Naive thymus-derived CD4-positive, alpha-beta T cell (primary cell): ENCODE measurements at regions of chr17 and their contacts with region 1.

Region 1: DNA sequence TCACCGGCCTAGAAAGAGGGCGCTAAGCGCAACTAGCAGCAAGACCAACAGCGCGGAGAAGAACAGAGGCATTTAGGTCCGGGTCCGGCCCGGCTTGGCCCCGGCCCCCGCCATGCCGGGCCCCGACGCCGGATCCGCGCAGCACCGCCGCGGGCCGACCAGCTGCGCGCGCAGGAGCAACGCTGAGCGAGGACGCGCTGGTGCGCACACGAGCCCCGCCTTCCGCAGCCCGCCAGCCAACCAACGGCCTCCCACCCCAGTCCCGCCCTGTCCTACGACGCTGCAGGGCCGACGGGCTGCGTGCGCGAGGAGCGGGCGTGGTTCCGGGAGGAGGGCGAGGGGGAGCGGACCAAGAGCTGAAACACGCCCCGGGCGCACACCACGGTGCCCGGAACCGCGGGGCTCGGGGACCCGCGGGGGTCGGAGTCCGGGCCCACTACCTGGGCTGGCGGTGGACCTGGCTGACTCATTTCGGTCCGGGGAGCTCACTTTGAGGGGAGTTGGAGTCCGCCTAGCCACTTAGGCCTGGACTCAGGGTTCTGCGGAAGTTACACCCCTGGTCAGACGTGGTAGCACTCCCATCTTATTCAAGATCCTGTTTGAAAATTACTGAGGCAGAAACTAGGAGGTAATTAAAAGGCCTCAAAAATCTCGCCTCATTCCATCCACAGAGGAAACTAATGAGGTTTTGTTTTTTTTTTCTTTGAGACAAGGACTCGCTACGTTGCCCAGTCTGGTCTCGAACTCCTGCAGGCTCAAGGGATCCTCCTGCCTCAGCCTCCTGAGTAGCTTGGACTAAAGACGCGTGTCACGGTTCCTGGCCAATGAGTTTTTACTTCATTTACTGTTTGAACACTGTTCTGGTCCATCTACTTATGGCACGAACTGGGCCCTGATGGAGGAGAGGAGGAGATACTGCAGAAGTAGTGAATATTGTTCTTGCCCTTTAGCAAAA is at the start of gene BLTP2:
- DNase-seq: peak; percentile 86 to 95 (median 93)
- ATAC-seq: peak; percentile 99
- H3K4me3 ChIP-seq: peak within 1 kb of the TSS; percentile 87
- H3K4me3 Mint-ChIP-seq: peak within 1 kb of the TSS; percentile 89 to 99 (median 94)
- H3K27ac ChIP-seq: peak within 1 kb of the TSS; percentile 95
- H3K27ac Mint-ChIP-seq: peak within 1 kb of the TSS; percentile 90 to 99 (median 97)
- H3K4me1 ChIP-seq: peaks cover 26 to 29% of the 10 kb centered on the region in 2 donors
- H3K4me1 Mint-ChIP-seq: peaks cover 29 to 57% (median 39%) of the 10 kb centered on the region in 7 donors
- H3K27me3 ChIP-seq: no peaks in the 10 kb centered on the region
- H3K27me3 Mint-ChIP-seq: no peaks in the 10 kb centered on the region
- total RNA-seq, gene BLTP2: 143 to 163 (median 153) TPM

Region 2: DNA sequence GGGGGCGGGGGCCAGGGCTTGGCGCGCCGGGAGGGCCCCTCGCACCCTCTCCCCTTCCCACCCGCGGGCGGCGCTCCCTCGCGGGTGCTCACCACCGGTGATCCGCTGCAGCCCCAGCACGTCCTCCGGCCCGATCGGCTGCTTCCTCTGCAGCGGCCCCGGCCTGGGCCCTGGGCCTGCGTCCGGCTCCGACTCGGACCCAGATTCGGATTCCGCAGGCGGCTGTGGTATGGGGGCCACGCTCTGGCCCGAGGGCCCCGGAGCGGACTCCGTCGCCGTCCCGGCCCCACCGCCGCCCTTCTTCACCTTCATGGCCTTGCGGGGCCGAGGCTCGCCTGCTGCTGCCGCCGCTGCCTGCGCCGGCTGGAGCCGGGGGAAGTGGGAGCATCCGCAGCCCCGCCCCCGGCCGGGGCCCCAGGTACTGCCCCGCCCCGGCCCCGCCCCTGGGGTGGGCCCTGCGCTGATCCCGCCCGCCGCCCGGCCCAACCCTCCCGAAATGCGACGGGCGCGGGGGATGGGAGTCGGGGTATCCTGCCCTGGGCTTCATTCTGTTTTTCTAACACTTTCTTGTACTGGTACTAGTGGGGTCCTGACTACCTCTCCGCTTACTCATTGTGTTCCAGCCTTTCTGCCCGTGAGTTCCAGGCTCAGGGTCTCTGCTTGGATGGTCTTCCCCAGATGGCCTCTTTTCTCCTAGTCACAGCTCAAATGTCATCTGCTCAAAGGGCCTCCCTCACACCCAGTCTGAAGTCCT is 92.8 kb before region 1 on chr17 and contains the start of gene UNC119:
- CTCF ChIA-PET with region 1: no interaction called
- POLR2A ChIA-PET with region 1: no interaction called
- intact Hi-C with region 1: loop called in 1 of 2 experiments (anchors 2 kb)
- DNase-seq: peak; percentile 59 to 87 (median 76)
- ATAC-seq: peak; percentile 84
- H3K4me3 ChIP-seq: peak within 1 kb of the TSS; percentile 54
- H3K4me3 Mint-ChIP-seq: peak within 1 kb of the TSS; percentile 85 to 100 (median 92)
- H3K27ac ChIP-seq: peak within 1 kb of the TSS; percentile 89
- H3K27ac Mint-ChIP-seq: peak within 1 kb of the TSS; percentile 91 to 98 (median 95)
- H3K4me1 ChIP-seq: peaks cover 35 to 44% of the 10 kb centered on the region in 2 donors
- H3K4me1 Mint-ChIP-seq: peaks cover 42 to 62% (median 54%) of the 10 kb centered on the region in 7 donors
- H3K27me3 ChIP-seq: no peaks in the 10 kb centered on the region
- H3K27me3 Mint-ChIP-seq: no peaks in the 10 kb centered on the region
- total RNA-seq, gene UNC119: 40.6 to 108 (median 90.2) TPM

Region 3: GRCh38 chr17:28598799-28599310 is 46.4 kb before region 1 on chr17 and contains the start of gene SPAG5:
- CTCF ChIA-PET with region 1: no interaction called
- POLR2A ChIA-PET with region 1: interaction called, 22 read pairs
- intact Hi-C with region 1: loop called (anchors 1 kb)
- DNase-seq: peak; percentile 93 to 97 (median 96)
- ATAC-seq: peak; percentile 98
- H3K4me3 ChIP-seq: peak within 1 kb of the TSS; percentile 93
- H3K4me3 Mint-ChIP-seq: peak within 1 kb of the TSS; percentile 88 to 99 (median 94)
- H3K27ac ChIP-seq: peak within 1 kb of the TSS; percentile 97
- H3K27ac Mint-ChIP-seq: peak within 1 kb of the TSS; percentile 96 to 99 (median 98)
- H3K4me1 ChIP-seq: peaks cover 8 to 10% of the 10 kb centered on the region in 2 donors
- H3K4me1 Mint-ChIP-seq: peaks cover 18 to 25% (median 21%) of the 10 kb centered on the region in 7 donors
- H3K27me3 ChIP-seq: no peaks in the 10 kb centered on the region
- H3K27me3 Mint-ChIP-seq: no peaks in the 10 kb centered on the region
- total RNA-seq, gene SPAG5: 10.4 to 95.3 (median 18.4) TPM

Region 4: DNA sequence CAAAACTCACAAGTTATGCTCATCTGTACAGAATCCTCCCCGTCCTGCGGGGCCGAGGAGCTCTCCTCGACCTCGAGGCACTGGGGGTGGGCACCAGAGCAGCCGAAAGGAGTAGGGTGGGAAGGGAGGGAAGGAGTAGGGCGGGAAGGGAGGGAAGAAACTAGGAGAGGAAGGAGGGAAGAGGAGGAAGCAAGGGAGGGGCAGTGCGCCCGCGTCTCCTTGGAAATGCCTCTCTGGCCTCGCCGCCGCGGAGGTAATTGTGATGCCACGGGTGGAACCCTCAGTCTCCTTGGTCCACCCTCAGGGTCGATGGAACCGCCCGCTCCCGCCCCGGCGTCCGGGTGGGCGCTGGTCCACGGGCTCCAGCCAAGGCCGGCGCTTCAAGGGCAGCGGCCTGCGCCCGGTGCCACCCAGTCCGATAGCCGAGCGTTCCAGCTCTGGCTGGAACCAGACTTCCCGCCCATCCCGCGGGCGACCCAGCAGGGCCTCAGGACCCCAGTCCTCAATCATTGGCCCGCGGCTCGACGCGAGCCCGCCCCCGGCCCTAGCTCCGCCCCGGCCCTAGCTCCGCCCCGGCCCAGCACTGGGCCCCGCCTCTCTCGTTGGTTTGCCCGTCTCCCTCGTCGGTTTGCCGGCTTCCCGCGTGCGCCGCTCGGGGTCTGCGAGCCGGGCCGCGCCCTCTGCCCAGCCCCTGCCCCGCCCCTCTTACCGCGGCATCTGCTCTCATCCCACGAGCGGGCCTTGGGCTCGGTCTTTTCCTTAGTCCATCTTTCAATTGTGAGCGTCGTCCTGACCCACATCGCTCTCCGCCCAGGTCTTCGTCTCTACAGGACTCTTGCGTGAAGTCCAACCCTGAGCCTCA is 65.8 kb after region 1 on chr17:
- CTCF ChIA-PET with region 1: no interaction called
- POLR2A ChIA-PET with region 1: interaction called, 33 read pairs
- intact Hi-C with region 1: loop called (anchors 1 kb)
- DNase-seq: peak; percentile 71 to 97 (median 85)
- ATAC-seq: peak; percentile 95
- H3K4me3 ChIP-seq: peak overlapping the region; percentile 95
- H3K4me3 Mint-ChIP-seq: peak overlapping the region; percentile 76 to 94 (median 92)
- H3K27ac ChIP-seq: peak overlapping the region; percentile 83
- H3K27ac Mint-ChIP-seq: peak overlapping the region; percentile 85 to 98 (median 93)
- H3K4me1 ChIP-seq: peaks cover 9 to 12% of the 10 kb centered on the region in 2 donors
- H3K4me1 Mint-ChIP-seq: peaks cover 12 to 29% (median 19%) of the 10 kb centered on the region in 7 donors
- H3K27me3 ChIP-seq: no peaks in the 10 kb centered on the region
- H3K27me3 Mint-ChIP-seq: peaks cover 0 to 14% (median 6%) of the 10 kb centered on the region in 5 donors

Region 5: DNA sequence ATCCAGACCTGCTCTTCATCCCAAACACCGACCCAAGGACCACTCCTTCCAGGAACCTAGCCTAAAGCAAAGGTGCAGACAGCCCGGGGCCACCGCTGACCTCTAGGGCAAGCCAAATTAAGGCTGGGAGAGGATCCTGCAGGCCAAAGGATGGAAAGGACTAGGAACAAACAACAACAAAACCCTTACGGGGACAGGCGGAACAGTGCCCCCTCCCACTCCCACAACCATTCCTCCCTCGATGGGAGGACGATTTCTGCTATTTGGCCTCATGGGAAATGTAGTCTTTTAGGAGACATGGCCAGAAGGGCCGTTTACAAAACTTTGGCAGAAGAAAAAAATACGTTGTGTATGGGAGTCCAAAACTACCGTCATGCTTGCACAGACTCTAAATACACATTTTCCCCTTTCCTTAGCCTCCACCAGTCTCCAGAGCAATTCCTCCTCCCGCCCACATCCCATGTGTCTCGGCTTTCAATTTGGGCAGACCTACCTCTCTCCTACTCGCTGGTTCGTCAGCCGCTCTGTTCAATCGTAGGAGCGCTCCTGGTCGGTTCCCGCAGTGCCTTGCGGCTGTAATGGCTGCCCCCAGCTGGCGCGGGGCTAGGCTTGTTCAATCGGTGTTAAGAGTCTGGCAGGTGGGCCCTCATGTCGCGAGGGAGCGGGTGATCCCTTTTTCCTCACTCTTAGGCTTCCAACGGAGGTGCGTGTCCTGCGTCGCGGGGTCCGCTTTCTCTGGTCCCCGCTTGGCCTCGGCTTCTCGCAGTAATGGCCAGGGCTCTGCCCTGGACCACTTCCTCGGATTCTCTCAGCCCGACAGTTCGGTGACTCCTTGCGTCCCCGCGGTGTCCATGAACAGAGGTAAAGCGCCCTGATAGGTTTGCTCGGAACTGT is 209.4 kb after region 1 on chr17 and contains the start of gene ERAL1:
- CTCF ChIA-PET with region 1: no interaction called
- POLR2A ChIA-PET with region 1: no interaction called
- intact Hi-C with region 1: loop called in 1 of 2 experiments (anchors 10 kb)
- DNase-seq: peak; percentile 63 to 87 (median 83)
- ATAC-seq: peak; percentile 100
- H3K4me3 ChIP-seq: peak within 1 kb of the TSS; percentile 86
- H3K4me3 Mint-ChIP-seq: peak within 1 kb of the TSS; percentile 90 to 100 (median 94)
- H3K27ac ChIP-seq: peak within 1 kb of the TSS; percentile 82
- H3K27ac Mint-ChIP-seq: peak within 1 kb of the TSS; percentile 85 to 94 (median 90)
- H3K4me1 ChIP-seq: peaks cover 7 to 12% of the 10 kb centered on the region in 2 donors
- H3K4me1 Mint-ChIP-seq: peaks cover 0 to 27% (median 11%) of the 10 kb centered on the region in 7 donors
- H3K27me3 ChIP-seq: no peaks in the 10 kb centered on the region
- H3K27me3 Mint-ChIP-seq: no peaks in the 10 kb centered on the region
- total RNA-seq, gene ERAL1: 19.8 to 50.0 (median 24.9) TPM

Region 6: DNA sequence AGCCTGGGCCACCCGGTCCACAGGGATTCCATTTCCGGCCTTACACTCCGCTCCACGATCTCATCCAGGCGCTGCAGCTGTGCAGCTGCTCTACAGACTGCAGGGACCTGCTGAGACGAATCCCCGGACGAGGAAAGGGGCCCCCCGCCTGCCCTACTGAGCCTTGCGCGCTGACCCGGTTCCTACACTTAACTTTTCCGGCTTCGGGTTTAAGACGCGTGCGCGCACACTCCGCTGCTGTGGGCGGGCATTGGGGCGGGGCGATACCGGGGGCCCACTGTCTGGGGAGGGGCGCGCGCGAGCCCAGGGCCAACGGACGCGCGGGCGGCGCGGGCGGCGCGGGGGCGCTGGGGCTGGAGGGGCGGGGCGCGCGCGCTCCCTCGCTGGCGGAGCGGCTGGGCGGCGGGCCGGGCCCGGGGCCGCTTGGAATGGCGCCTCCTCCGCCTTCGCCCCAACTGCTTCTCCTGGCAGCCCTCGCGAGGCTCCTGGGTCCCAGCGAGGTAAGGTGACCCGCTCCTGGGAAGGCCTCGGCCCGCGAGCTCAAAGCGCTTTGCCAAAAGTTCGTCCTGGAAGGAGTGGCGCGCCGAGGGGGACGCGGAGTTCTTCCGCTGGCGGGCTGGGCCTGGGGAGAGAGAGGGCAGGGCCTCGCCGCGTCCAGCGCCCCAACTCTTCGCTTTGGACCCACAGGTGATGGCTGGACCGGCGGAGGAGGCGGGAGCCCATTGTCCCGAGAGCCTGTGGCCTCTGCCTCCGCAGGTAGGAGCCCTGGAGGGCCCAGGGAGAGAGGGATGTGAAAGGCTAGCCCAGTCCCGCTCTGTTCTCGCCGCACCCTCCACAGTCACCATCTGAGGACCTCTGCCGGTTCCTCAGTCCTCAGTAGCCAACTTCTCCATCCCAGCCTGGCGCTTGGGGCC is 923.3 kb after region 1 on chr17 and contains the start of gene TP53I13:
- CTCF ChIA-PET with region 1: no interaction called
- POLR2A ChIA-PET with region 1: no interaction called
- intact Hi-C with region 1: loop called in 1 of 2 experiments (anchors 5 kb)
- DNase-seq: peak; percentile 65 to 90 (median 81)
- ATAC-seq: peak; percentile 81
- H3K4me3 ChIP-seq: peak within 1 kb of the TSS; percentile 89
- H3K4me3 Mint-ChIP-seq: peak within 1 kb of the TSS; percentile 88 to 99 (median 95)
- H3K27ac ChIP-seq: peak within 1 kb of the TSS; percentile 78
- H3K27ac Mint-ChIP-seq: peak within 1 kb of the TSS; percentile 82 to 97 (median 92)
- H3K4me1 ChIP-seq: peaks cover 12 to 30% of the 10 kb centered on the region in 2 donors
- H3K4me1 Mint-ChIP-seq: peaks cover 21 to 42% (median 32%) of the 10 kb centered on the region in 7 donors
- H3K27me3 ChIP-seq: no peaks in the 10 kb centered on the region
- H3K27me3 Mint-ChIP-seq: no peaks in the 10 kb centered on the region
- total RNA-seq, gene TP53I13: 61.6 to 87.5 (median 62.8) TPM